ENCODE measurements at regions of chr1 and their contacts with region 1.

Region 1: DNA sequence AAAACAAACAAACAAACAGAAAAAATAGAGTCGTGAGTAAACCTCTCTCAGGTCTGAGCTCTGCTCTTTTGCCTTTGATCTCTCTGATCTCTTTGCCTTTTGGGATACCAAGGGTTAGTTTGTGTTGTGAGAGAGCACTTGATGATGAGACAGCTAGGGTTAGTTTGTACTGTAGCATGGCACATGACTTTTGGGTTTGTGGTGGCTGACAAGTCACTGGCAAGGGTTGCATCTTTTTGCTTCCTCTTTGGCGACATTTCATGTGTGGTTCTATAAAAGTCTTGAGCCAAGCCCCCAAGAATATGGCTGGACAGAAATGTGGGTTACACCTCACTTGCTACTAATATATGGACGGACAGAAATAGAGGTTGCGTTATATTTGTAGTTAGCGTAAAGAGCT is 60.5 kb downstream of the TESK2 start:
- DNase-seq: no peak
- H3K4me3 Mint-ChIP-seq: no peak overlapping the region
- H3K27ac Mint-ChIP-seq: no peak overlapping the region
- H3K4me1 Mint-ChIP-seq: no peaks in the 10 kb centered on the region
- H3K27me3 Mint-ChIP-seq: no peaks in the 10 kb centered on the region

Region 2: DNA sequence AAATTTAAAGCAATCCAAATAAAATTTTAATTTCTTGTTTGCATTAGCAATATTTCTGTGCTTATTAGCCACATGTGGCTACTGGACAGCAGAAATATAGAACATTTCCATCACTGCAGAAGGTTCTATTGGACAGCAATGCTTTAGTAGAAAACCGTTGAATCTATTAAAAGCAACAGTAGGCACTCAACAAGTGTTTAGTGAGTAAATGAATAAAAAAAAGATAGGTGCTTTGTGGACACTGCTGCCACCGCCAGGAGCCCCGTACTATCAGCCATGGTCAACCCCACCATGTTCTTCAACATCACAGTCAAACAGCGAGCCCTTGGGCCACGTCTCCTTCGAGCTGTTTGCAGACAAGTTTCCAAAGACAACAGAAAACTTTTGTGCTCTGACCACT is 15.7 kb before region 1 on chr1:
- CTCF ChIA-PET with region 1: no interaction called
- POLR2A ChIA-PET with region 1: interaction called, 10 read pairs
- DNase-seq: no peak
- H3K4me3 Mint-ChIP-seq: no peak overlapping the region
- H3K27ac Mint-ChIP-seq: no peak overlapping the region
- H3K4me1 Mint-ChIP-seq: no peaks in the 10 kb centered on the region
- H3K27me3 Mint-ChIP-seq: no peaks in the 10 kb centered on the region

Region 3: GRCh38 chr1:45446950-45447672 is 16.6 kb after region 1 on chr1:
- CTCF ChIA-PET with region 1: interaction called, 4 read pairs
- POLR2A ChIA-PET with region 1: interaction called, 11 read pairs
- DNase-seq: no peak
- H3K4me3 Mint-ChIP-seq: no peak overlapping the region
- H3K27ac Mint-ChIP-seq: no peak overlapping the region
- H3K4me1 Mint-ChIP-seq: no peaks in the 10 kb centered on the region
- H3K27me3 Mint-ChIP-seq: no peaks in the 10 kb centered on the region

Measured in activated CD4-positive, alpha-beta T cell treated with anti-CD3 and anti-CD28 coated beads, Interleukin-2, amount 10 ng/mL, durations not matched to agents 7 days and 5 days (primary cell).